CD8-positive, alpha-beta memory T cell (primary cell): ENCODE measurements at regions of chr3 and their contacts with region 1.

Region 1: DNA sequence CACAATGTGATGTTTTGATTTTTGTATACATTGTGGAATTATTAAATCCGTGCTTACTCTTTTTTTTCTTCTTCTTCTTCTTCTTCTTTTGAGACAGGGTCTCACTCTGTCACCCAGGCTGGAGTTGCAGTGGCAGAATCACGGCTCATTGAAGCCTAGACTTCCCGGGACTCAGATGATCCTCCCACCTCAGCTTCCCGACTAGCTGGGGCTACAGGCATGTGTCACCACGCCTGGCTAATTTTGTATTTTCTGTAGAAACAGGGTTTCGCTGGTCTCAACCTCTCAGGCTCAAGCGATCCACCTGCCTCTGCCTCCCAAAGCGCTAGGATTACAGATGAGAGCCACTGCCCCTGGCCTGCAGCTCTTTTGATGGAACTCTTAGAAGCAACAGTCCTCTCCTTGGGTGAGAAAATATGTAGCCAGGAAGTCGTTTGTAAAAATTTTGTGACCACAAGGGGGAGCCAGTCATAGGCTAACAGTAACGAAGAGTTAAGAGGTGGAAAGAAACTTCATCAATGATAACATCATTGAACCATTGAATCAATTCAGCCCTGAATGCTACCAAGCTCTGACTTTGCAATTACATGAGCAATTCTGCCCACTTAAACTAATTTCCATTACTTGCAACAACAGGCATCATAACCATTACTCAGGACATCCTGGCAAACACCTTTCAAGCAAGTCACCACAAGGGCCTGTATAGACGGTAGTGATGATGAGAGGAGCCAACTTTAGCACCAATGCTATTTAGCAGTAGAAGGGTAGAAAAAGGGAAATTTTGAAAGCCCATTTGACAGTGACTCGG is 16.7 kb upstream of the CMTM7 start:
- DNase-seq: peak; percentile 37 to 77 (median 68)
- H3K4me3 ChIP-seq: no peak overlapping the region
- H3K4me3 Mint-ChIP-seq: no peak overlapping the region
- H3K27ac ChIP-seq: no peak overlapping the region
- H3K27ac Mint-ChIP-seq: peak overlapping the region in 2 of 8 donors; percentile 10 to 90
- H3K4me1 ChIP-seq: peaks cover 23% of the 10 kb centered on the region
- H3K4me1 Mint-ChIP-seq: peaks cover 11 to 23% (median 16%) of the 10 kb centered on the region in 3 donors
- H3K27me3 ChIP-seq: no peaks in the 10 kb centered on the region
- H3K27me3 Mint-ChIP-seq: no peaks in the 10 kb centered on the region

Region 2: DNA sequence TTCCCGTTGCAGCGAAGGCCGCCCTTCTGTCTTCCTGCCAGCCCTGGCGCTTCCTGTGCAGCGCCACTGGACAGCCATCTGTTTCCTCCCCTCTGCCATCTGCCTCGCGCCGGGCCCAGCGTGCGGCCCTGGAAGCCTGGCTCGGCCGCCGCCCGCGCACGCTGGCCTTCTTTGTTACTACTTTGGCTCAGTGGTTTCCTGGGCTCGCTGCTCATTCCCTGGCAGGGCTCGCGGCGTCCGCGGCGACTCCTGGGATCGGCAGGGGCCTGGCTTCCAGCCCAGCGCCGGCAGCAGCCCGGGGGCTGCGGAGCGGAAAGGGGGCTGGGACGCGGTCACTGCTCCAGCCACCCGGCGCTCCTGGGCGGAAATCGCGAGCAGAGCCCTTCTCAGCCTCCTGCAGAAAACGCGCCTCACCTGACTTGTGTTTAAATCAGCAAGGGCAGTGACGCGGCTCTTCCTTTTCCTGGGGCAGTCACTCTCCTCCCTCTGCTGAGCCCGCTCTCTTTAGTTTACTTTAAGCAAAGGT is 26.6 kb after region 1 on chr3:
- CTCF ChIA-PET with region 1: interaction called, 160 read pairs
- POLR2A ChIA-PET with region 1: no interaction called
- DNase-seq: peak; percentile 38 to 78 (median 57)
- H3K4me3 ChIP-seq: peak overlapping the region; percentile 67
- H3K4me3 Mint-ChIP-seq: peak overlapping the region; percentile 84 to 98 (median 91)
- H3K27ac ChIP-seq: peak overlapping the region; percentile 73
- H3K27ac Mint-ChIP-seq: peak overlapping the region; percentile 93 to 99 (median 96)
- H3K4me1 ChIP-seq: peaks cover 48% of the 10 kb centered on the region
- H3K4me1 Mint-ChIP-seq: peaks cover 52 to 90% (median 65%) of the 10 kb centered on the region in 3 donors
- H3K27me3 ChIP-seq: no peaks in the 10 kb centered on the region
- H3K27me3 Mint-ChIP-seq: no peaks in the 10 kb centered on the region

Region 3: DNA sequence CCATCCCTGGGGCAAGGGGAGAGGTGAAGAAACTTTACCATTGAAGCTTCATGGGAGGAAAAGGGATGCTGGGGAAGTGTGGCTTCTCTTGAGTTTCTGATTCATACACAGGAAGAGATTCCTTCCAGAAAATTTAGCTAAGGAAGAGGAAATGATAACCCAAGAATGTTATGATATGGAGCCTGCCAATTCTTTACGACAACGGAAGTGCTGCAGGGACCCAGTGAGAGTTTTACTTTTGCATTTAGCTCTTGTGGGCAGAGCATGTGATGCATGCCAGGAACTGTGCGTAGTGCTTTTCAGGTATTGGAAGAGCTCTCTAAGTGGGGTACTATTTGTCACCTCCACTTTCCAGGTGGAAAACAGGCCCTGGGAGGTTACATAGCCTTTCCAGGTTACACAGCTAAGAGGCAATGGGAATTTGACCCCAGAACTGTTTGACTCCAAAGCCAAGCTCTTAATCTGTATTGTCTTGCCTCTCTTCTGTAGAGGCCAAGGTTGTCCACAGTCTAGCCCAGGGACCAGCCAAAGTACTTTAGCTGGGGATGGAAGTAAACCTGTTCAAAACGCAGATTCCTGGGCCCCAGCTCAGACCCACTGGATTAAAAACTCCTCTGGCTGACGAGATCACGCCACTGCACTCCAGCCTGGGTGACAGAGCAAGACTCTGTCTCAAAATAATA is 39.7 kb after region 1 on chr3:
- CTCF ChIA-PET with region 1: interaction called, 15 read pairs
- POLR2A ChIA-PET with region 1: no interaction called
- DNase-seq: peak in 3 of 5 donors; percentile 51 to 72 (median 71)
- H3K4me3 ChIP-seq: no peak overlapping the region
- H3K4me3 Mint-ChIP-seq: peak overlapping the region; percentile 5 to 84 (median 60)
- H3K27ac ChIP-seq: no peak overlapping the region
- H3K27ac Mint-ChIP-seq: peak overlapping the region; percentile 94 to 98 (median 96)
- H3K4me1 ChIP-seq: peaks cover 72% of the 10 kb centered on the region
- H3K4me1 Mint-ChIP-seq: peaks cover 45 to 93% (median 66%) of the 10 kb centered on the region in 3 donors
- H3K27me3 ChIP-seq: no peaks in the 10 kb centered on the region
- H3K27me3 Mint-ChIP-seq: no peaks in the 10 kb centered on the region

Region 4: GRCh38 chr3:32453346-32453745 is 78.4 kb after region 1 on chr3:
- CTCF ChIA-PET with region 1: interaction called, 13 read pairs
- POLR2A ChIA-PET with region 1: interaction called, 10 read pairs
- DNase-seq: no peak
- H3K4me3 ChIP-seq: no peak overlapping the region
- H3K4me3 Mint-ChIP-seq: no peak overlapping the region
- H3K27ac ChIP-seq: no peak overlapping the region
- H3K27ac Mint-ChIP-seq: peak overlapping the region in 6 of 8 donors; percentile 32 to 79 (median 56)
- H3K4me1 ChIP-seq: peaks cover 41% of the 10 kb centered on the region
- H3K4me1 Mint-ChIP-seq: peaks cover 36 to 69% (median 51%) of the 10 kb centered on the region in 3 donors
- H3K27me3 ChIP-seq: no peaks in the 10 kb centered on the region
- H3K27me3 Mint-ChIP-seq: no peaks in the 10 kb centered on the region